Activated CD4-positive, alpha-beta T cell treated with anti-CD3 and anti-CD28 coated beads, Interleukin-2, amount 10 ng/mL, durations not matched to agents 7 days and 5 days (primary cell): ENCODE measurements at regions of chr11 and their contacts with region 1.

Region 1: DNA sequence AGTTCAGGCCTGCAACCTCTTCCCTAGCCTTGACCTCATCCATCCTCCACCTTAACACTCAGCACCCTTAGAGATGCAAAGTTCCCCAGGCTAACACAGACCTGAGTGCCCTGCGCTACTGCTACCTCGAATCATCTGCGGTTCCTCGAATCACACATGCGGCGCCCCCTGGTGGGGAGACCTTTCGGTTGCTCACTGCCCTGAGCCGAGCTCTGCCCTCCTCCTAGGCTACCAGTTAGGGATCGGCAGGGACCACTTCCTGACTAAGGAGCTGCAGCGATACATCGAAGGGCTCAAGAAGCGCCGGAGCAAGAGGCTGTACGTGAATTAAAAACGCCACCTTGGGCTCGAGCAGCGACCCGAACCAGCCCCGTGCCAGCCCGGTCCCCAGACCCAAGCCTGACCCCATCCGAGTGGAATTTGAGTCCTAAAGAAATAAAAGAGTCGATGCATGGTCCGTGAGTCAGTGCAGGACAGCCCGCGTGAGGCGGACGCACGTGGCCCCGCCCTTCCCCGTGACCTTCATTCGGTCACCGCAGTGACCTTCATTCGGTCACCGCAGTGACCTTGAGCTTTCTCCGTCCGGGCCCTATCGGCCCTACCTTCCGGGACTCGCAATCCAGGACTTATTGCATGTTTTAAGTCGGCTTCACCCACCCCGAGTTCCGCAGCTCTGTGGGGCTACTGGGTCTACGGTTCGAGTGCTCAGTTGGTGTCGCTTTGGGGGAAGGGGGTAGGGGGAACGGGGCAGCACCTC is 830 bp upstream of the ESRRA start:
- DNase-seq: peak; percentile 95
- H3K4me3 Mint-ChIP-seq: peak overlapping the region; percentile 82
- H3K27ac Mint-ChIP-seq: peak overlapping the region; percentile 98
- H3K4me1 Mint-ChIP-seq: peaks cover 44% of the 10 kb centered on the region
- H3K27me3 Mint-ChIP-seq: peaks cover 18% of the 10 kb centered on the region

Region 2: GRCh38 chr11:64204464-64204989 is 100.0 kb before region 1 on chr11:
- CTCF ChIA-PET with region 1: interaction called, 75 read pairs
- POLR2A ChIA-PET with region 1: no interaction called
- DNase-seq: peak; percentile 86
- H3K4me3 Mint-ChIP-seq: peak overlapping the region; percentile 33
- H3K27ac Mint-ChIP-seq: peak overlapping the region; percentile 77
- H3K4me1 Mint-ChIP-seq: peaks cover 51% of the 10 kb centered on the region
- H3K27me3 Mint-ChIP-seq: no peaks in the 10 kb centered on the region

Region 3: DNA sequence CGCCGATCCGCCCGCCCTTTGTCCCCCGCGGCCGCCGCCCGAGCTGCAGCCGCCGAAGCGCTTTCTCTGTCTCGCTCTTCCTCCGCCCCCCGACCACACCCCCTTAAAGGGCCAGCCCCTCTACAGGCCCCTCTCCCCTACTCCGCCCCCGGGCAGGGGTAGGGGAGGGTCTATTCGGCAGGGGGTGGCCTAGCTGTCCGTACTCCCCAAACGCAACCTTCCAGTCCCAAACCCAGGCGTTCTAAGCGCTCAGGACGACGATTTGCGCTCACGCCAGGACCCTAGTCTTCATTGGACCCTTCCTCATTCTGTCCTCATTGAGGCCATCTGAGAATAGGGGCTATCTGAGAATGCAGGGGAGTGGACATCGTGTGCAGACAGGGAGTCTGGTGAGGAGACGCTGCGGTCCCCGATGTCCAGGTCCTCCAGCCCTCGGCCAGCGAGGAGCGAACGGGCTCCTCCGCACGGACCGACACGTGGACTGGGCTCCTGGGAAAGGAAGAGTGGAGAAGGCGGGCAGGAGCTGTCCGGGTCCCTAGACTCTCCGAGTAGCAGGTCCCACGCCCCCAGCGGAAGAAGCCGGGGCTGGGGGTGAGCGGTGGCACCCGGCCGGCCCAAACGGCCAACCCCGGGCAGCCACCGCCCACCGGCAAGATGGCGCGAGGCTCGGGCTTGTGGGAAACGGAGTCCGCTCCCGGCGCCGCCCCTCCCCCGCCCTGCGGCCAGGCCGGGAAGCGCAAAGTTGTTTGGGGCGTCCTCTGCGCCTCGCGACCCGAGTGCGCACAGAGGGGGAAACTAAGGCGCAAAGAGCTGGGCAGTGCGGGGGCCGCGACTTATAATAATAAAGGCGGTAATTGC is 57.4 kb before region 1 on chr11 and contains the start of gene PPP1R14B:
- CTCF ChIA-PET with region 1: interaction called, 35 read pairs
- POLR2A ChIA-PET with region 1: no interaction called
- DNase-seq: peak; percentile 82
- H3K4me3 Mint-ChIP-seq: peak within 1 kb of the TSS; percentile 81
- H3K27ac Mint-ChIP-seq: peak within 1 kb of the TSS; percentile 87
- H3K4me1 Mint-ChIP-seq: peaks cover 48% of the 10 kb centered on the region
- H3K27me3 Mint-ChIP-seq: no peaks in the 10 kb centered on the region
- total RNA-seq, gene PPP1R14B: 81.1 to 86.0 TPM

Region 4: GRCh38 chr11:64284048-64284961 is 20.2 kb before region 1 on chr11 and contains the start of gene BAD:
- CTCF ChIA-PET with region 1: interaction called, 92 read pairs
- POLR2A ChIA-PET with region 1: no interaction called
- DNase-seq: peak; percentile 95
- H3K4me3 Mint-ChIP-seq: peak within 1 kb of the TSS; percentile 82
- H3K27ac Mint-ChIP-seq: peak within 1 kb of the TSS; percentile 91
- H3K4me1 Mint-ChIP-seq: peaks cover 30% of the 10 kb centered on the region
- H3K27me3 Mint-ChIP-seq: peaks cover 1% of the 10 kb centered on the region
- total RNA-seq, gene BAD: 32.0 to 34.2 TPM

Region 5: GRCh38 chr11:64317957-64318693 is 13.6 kb after region 1 on chr11 and contains the start of gene PRDX5:
- CTCF ChIA-PET with region 1: interaction called, 35 read pairs
- POLR2A ChIA-PET with region 1: interaction called, 4 read pairs
- DNase-seq: peak; percentile 96
- H3K4me3 Mint-ChIP-seq: peak within 1 kb of the TSS; percentile 94
- H3K27ac Mint-ChIP-seq: peak within 1 kb of the TSS; percentile 99
- H3K4me1 Mint-ChIP-seq: peaks cover 36% of the 10 kb centered on the region
- H3K27me3 Mint-ChIP-seq: no peaks in the 10 kb centered on the region
- total RNA-seq, gene PRDX5: 97.4 to 106 TPM

Region 6: DNA sequence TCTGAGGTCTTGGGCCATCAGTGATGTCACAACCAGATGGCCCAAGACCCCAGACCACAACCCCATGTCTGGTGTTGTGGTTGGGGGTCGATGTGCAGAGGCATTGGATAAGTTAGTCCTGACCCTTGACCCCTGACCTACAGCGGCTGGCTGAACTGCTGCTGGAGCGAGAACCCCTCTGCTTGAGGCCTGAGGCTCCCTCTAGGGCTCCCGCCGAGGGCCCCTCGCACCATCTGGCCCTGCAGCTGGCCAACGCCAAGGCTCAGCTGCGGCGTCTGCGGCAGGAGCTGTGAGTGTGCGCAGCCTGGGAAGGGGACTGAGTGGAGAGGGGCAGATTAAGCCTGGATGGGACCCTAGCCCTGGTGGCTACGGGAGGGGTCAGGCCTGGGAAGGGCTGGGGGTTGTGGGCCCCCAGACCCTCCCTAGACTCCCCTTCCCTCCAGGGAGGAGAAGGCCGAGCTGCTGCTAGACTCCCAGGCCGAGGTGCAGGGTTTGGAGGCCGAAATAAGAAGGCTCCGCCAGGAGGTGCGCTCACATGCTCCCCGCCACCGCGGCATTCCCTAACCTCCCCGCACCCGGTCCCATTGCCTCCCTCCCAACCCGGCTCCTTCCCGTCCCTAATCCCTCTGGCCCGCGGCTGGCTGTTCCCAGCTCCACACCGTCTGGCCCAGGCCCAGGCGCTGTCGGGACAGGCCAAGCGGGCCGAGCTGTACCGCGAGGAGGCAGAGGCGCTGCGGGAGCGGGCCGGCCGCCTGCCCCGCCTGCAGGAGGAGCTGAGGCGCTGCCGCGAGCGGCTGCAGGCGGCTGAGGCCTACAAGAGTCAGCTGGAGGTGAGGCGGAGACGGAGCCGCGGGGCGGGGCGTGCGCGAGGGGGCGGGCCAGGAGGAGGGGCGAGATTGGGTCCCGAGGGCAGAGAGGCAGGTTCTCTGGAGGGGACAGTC is 37.6 kb after region 1 on chr11:
- CTCF ChIA-PET with region 1: interaction called, 14 read pairs
- POLR2A ChIA-PET with region 1: no interaction called
- DNase-seq: peak; percentile 93
- H3K4me3 Mint-ChIP-seq: peak overlapping the region; percentile 84
- H3K27ac Mint-ChIP-seq: no peak overlapping the region
- H3K4me1 Mint-ChIP-seq: peaks cover 53% of the 10 kb centered on the region
- H3K27me3 Mint-ChIP-seq: no peaks in the 10 kb centered on the region